ENCODE measurements at regions of chr7 and their contacts with region 1.

Region 1: DNA sequence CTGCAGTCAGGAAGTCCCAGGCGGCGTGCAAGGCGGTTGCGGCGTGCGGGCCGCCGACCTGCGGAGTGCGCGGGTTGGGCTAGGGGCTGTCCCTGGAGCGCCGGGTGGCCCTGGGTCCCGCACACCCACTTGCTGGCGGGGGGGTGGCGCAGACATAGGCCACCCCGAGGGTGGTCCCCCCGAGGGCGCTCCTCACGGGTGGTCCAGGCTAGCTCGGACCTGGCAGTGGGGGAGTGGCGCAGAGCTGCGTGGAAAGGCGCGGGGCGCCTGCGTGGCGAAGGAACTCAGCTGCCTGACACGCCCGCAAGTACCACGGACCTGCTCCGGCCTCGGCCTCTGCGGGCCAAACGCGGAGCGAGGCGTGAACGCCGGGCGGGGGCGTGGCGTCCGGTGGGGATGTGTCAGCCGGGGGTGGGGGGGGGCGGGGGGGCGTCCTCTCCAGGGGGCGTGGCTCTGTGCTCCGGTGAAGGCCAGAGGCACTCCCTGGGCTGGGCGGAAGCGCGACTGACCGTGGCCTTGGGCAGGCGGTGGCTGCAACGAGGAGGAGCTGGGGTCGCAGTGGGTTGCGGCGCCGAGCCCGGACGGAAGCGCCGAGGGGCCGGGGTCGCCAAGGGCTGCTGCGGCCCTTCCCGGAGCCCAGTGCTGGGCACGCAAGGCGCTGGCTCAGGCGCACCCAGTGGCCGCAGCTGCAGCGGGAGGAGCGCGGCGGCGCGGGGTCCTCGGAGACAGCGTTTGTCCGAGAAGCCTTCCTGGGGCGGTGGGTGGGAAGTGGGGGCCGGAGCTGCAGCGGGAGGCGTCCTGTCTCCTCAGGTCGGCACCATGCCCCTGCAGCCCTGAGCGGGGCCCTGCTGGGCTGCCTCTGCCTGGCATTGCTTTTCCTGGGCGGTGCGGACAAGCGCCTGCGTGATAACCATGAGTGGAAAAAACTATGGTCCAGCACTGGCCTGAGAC is 58.9 kb upstream of the NUPR2 start:
- DNase-seq: peak in 1 of 2 donors; percentile 82
- H3K4me3 ChIP-seq: peak overlapping the region; percentile 69 to 81
- H3K27ac ChIP-seq: peak overlapping the region; percentile 71
- H3K4me1 ChIP-seq: no peaks in the 10 kb centered on the region
- H3K27me3 ChIP-seq: no peaks in the 10 kb centered on the region
- CTCF ChIP-seq: no peak

Region 2: DNA sequence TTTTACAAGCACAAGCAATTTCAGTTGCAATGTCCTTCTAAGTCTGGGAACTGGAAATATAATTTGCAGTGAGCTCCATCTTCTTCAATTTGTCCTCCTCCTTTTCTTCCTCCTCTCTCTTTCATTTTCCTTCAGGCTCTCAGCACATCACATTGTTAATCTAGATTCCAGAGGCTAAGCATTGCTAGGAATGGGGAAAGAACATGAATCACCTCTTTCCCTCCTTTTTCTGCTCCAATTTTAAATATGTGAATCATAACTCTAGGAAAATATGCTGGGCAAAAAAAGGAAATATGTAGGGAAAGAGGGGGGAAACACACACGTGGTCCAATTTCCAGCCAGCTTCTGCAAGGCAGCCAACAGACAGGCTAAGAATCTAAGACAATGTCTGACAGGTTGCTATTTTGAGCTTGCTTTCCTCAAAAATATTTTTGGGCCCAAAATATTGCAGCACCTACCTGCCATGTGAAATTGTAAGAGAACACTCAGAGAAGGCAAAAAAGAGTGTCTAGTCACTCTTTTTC is 13.8 kb after region 1 on chr7:
- intact Hi-C with region 1: loop called (anchors 1 kb)
- DNase-seq: peak in 1 of 2 donors; percentile 74
- H3K4me3 ChIP-seq: no peak overlapping the region
- H3K27ac ChIP-seq: peak overlapping the region; percentile 76 to 78
- H3K4me1 ChIP-seq: peaks cover 4 to 17% of the 10 kb centered on the region in 2 donors
- H3K27me3 ChIP-seq: no peaks in the 10 kb centered on the region
- CTCF ChIP-seq: no peak

Region 3: DNA sequence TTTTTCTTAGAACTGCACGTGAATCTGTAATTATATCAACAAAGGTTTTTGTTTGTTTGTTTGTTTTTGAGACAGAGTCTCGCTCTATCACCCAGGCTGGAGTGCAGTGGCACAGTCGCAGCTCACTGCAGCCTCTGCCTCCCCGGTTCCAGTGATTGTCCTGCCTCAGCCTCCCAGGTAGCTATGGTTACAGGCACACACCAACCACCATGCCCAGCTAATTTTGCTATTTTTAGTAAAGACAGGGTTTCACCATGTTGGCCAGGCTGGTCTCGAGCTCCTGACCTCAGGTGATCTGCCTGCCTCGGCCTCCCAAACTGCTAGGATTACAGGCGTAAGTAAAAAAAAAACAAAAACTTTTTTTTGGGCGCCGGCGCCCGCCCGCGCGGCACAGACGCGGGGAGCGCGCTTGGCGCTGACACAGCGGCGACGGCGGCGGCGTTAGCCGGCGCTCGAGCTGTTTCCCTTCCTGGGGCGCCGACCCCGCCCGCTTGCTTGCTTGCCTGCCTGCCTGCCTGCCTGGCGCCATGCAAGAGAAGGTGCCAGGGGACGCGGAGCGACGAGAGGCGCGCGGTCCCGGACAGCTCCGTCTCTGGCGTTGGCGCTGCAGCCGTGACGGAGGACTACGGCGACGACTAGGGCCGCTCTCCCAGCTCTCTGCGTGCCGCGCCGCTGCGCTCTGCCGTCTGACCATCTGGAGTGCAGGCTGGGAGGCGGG is 112.5 kb after region 1 on chr7:
- intact Hi-C with region 1: loop called (anchors 5 kb)
- DNase-seq: peak; percentile 10 to 72
- H3K4me3 ChIP-seq: peak overlapping the region; percentile 52 to 66
- H3K27ac ChIP-seq: peak overlapping the region; percentile 80 to 83
- H3K4me1 ChIP-seq: no peaks in the 10 kb centered on the region
- H3K27me3 ChIP-seq: no peaks in the 10 kb centered on the region
- CTCF ChIP-seq: no peak